SK-N-SH (cell line): ENCODE measurements at regions of chr7 and their contacts with region 1.

Region 1: DNA sequence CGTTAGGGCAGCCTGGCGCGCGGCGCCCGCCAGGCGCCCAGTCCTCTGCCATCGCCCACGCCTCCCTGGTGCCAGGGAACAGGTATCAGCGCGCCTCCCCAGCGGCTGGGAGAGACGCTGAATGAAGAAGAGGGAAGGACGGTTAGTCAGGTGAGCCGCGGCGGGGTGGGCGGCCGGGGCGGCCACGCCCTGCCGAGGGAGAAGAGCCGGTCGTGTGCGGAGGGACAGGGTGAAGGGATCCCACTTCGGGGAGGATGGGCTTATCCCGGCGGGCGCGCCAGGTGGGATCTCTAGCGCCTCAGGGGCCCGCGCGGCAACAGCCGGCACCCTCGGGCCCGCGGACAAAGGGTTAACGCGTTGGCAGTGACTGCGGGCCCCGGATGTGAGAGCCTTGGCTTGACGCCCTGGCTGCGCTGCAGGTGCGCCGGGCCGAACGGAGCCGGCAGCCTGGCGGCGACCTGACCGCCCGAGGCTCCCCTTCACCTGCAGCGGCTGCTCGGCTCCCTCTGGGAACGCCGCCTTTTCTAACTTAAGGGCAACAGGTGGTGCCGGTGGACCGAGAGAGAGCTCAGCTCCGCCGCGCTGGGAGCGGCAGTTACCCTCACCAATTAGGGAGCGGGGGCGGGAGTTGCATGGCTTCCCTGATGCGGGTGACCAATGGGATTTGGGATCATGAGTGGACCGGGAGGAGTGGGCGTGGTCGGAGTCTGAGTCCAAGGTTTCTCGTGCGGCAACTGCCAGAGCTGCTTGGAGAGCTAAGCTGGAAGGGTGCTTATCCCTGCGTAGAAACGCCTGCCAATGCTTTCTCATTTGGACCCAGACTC is at the start of gene ARL4A:
- DNase-seq: peak; percentile 98
- H3K4me3 ChIP-seq: peak within 1 kb of the TSS; percentile 92 to 93
- H3K27ac ChIP-seq: peak within 1 kb of the TSS; percentile 72 to 86
- H3K4me1 ChIP-seq: peaks cover 12 to 13% of the 10 kb centered on the region in 2 experiments; a peak in 3 of 4 replicates
- H3K27me3 ChIP-seq: no peaks in the 10 kb centered on the region
- CTCF ChIP-seq: peak; percentile 33
- EP300 ChIP-seq: peak in 1 of 2 experiments; percentile 42; a peak in 1 of 4 replicates
- RAD21 ChIP-seq: peak; percentile 69
- polyA plus RNA-seq, gene ARL4A: 5.5 and 6.5 TPM in 2 replicates

Region 2: DNA sequence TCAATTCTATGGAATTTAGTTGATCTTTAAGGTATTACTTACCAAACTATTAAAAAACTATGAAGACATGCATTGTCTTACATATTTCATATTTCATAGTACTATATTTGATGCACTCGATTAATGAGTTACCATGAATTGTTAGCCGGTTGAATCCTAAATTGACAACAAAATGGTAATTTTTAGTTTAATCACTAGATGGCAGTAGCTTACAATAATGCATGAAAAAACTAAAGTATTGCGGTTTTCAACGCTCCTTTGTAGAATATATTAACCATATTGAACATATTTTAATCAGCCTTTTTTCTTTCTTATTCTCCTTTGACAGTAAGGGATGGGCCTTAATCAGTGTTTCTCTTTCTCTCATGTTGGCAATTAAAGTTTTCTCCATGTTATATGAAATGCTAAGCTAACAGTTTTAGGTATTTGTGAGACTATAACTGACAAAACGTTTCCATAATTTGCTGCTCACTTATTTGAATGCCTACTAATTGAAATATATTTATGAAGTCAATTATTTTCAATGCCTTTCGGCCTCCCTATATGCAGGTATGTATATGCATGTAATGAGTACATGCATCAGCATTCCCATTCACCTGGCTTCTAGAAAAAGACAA is 48.1 kb before region 1 on chr7:
- CTCF ChIA-PET with region 1: interaction called, 16 read pairs
- POLR2A ChIA-PET with region 1: no interaction called
- DNase-seq: peak; percentile 39
- H3K4me3 ChIP-seq: no peak overlapping the region
- H3K27ac ChIP-seq: no peak overlapping the region
- H3K4me1 ChIP-seq: peaks cover 0 to 6% of the 10 kb centered on the region in 2 experiments; a peak in 3 of 4 replicates
- H3K27me3 ChIP-seq: no peaks in the 10 kb centered on the region; the same call in 1 of the 2 replicates
- CTCF ChIP-seq: peak; percentile 89
- EP300 ChIP-seq: no peak
- RAD21 ChIP-seq: peak; percentile 86

Region 3: DNA sequence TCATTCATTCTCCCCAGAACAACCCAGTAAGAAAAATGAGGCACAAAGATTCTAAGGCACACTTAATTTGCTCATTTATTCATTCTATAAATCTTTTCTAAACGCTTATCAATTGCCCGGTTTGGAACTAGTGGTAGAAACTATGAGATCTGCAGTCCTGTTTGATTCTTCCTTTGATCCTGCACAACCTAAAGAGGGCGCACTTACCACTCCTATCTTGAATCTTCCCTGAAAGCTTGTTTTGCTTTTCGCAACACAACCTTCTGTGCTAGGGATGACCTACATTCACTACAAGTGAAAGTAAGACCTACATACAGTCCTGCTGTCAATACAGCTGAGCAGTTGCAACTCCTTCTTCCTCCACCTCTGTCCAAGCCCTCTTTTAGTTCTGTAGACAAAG is 12.3 kb before region 1 on chr7:
- CTCF ChIA-PET with region 1: interaction called, 21 read pairs
- POLR2A ChIA-PET with region 1: no interaction called
- DNase-seq: peak; percentile 35
- H3K4me3 ChIP-seq: no peak overlapping the region
- H3K27ac ChIP-seq: no peak overlapping the region
- H3K4me1 ChIP-seq: no peaks in the 10 kb centered on the region
- H3K27me3 ChIP-seq: no peaks in the 10 kb centered on the region
- CTCF ChIP-seq: peak; percentile 41; the same call in 1 of the 2 replicates
- EP300 ChIP-seq: no peak
- RAD21 ChIP-seq: peak; percentile 54; the same call in 1 of the 2 replicates

Region 4: DNA sequence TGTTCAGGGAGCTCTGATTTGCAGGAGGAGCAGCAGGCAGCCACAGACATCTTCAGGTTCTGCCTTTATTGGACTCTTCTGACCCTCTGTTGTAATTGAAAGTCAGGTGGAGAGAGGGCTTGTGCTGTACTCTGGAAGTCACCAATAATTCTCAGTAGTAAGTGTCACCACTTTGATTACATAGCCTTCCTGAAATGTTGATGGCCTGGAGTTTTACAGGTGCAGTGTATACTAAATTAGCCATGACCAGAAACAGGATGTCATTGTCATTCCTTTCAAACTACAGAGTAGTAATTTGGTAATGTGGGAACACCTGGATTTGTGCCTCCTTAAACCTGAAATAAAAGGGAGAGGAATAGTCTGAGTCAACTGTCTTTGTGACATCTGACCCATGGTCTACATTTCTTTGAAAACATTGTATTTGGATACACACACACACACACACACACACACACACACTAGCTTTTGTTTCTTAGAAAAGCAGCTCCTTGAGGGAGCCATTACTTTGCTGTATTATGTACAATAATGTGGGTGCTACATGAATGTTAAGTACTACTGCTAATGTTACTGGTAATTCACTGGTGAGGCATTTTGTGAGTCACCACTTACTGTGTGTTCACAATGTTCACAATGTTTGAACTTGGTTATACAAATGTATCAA is 19.9 kb after region 1 on chr7:
- CTCF ChIA-PET with region 1: interaction called, 71 read pairs
- POLR2A ChIA-PET with region 1: no interaction called
- DNase-seq: no peak
- H3K4me3 ChIP-seq: no peak overlapping the region
- H3K27ac ChIP-seq: no peak overlapping the region
- H3K4me1 ChIP-seq: peaks cover 0 to 7% of the 10 kb centered on the region in 2 experiments; a peak in 1 of 4 replicates
- H3K27me3 ChIP-seq: no peaks in the 10 kb centered on the region
- CTCF ChIP-seq: no peak
- EP300 ChIP-seq: no peak
- RAD21 ChIP-seq: no peak

Region 5: GRCh38 chr7:12715372-12716133 is 28.4 kb after region 1 on chr7:
- CTCF ChIA-PET with region 1: interaction called, 11 read pairs
- POLR2A ChIA-PET with region 1: no interaction called
- DNase-seq: no peak
- H3K4me3 ChIP-seq: no peak overlapping the region
- H3K27ac ChIP-seq: no peak overlapping the region
- H3K4me1 ChIP-seq: peaks cover 0 to 16% of the 10 kb centered on the region in 2 experiments; a peak in 1 of 4 replicates
- H3K27me3 ChIP-seq: no peaks in the 10 kb centered on the region
- CTCF ChIP-seq: no peak
- EP300 ChIP-seq: no peak
- RAD21 ChIP-seq: no peak

Region 6: GRCh38 chr7:12728192-12728538 is 41.1 kb after region 1 on chr7:
- CTCF ChIA-PET with region 1: interaction called, 20 read pairs
- POLR2A ChIA-PET with region 1: no interaction called
- DNase-seq: no peak
- H3K4me3 ChIP-seq: no peak overlapping the region
- H3K27ac ChIP-seq: no peak overlapping the region
- H3K4me1 ChIP-seq: peaks cover 0 to 5% of the 10 kb centered on the region in 2 experiments; a peak in 2 of 4 replicates
- H3K27me3 ChIP-seq: no peaks in the 10 kb centered on the region
- CTCF ChIP-seq: no peak
- EP300 ChIP-seq: no peak
- RAD21 ChIP-seq: no peak

Region 7: GRCh38 chr7:13262929-13263530 is 575.9 kb after region 1 on chr7:
- CTCF ChIA-PET with region 1: interaction called, 33 read pairs
- POLR2A ChIA-PET with region 1: no interaction called
- DNase-seq: peak; percentile 5
- H3K4me3 ChIP-seq: no peak overlapping the region
- H3K27ac ChIP-seq: no peak overlapping the region
- H3K4me1 ChIP-seq: no peaks in the 10 kb centered on the region
- H3K27me3 ChIP-seq: no peaks in the 10 kb centered on the region; the same call in 1 of the 2 replicates
- CTCF ChIP-seq: peak; percentile 85
- EP300 ChIP-seq: no peak
- RAD21 ChIP-seq: peak; percentile 90